ENCODE measurements at regions of chr22 and their contacts with region 1.

Region 1: GRCh38 chr22:18024276-18024947 is at the start of gene MICAL3:
- DNase-seq: peak; percentile 68 to 85 (median 74)
- ATAC-seq: peak; percentile 97
- H3K4me3 ChIP-seq: peak within 1 kb of the TSS; percentile 40
- H3K27ac ChIP-seq: no peak within 1 kb of the TSS
- H3K4me1 ChIP-seq: peaks cover 6 to 14% of the 10 kb centered on the region in 2 experiments; a peak in 4 of 5 replicates
- H3K27me3 ChIP-seq: peaks cover 18 to 21% of the 10 kb centered on the region in 2 experiments; a peak in 4 of 5 replicates
- CTCF ChIP-seq: peak; percentile 76 to 86 (median 82)
- EP300 ChIP-seq: no peak
- POLR2A ChIP-seq: no peak
- RAD21 ChIP-seq: peak; percentile 62 to 86
- polyA plus RNA-seq, gene MICAL3: 0.53 to 0.56 TPM

Region 2: DNA sequence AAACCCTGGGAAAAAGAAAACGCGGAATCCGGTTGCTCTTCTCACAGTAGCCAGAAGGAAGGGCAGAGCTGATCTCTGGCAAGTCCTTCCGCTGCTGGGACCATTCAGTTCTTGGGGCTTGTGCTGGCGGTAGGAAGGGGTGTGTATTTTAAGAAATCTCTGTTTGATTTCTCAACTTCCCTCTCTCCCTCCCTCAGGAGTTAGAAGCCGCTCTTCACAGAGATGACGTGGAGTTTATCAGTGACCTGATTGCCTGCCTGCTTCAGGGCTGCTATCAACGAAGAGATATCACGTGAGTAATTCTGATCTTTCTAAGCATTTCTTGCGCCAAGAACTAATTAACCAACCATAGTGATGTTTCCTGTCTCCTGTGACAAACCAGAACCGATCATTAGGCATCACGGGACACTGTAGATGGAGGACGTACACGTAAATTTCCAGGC is 547.0 kb before region 1 on chr22:
- CTCF ChIA-PET with region 1: no interaction called
- POLR2A ChIA-PET with region 1: no interaction called
- in situ Hi-C with region 1: no loop called
- intact Hi-C with region 1: no loop called
- DNase-seq: no peak
- ATAC-seq: peak; percentile 58
- H3K4me3 ChIP-seq: no peak overlapping the region
- H3K27ac ChIP-seq: no peak overlapping the region
- H3K4me1 ChIP-seq: no peaks in the 10 kb centered on the region
- H3K27me3 ChIP-seq: peaks cover 35 to 44% of the 10 kb centered on the region in 2 experiments
- CTCF ChIP-seq: no peak
- EP300 ChIP-seq: no peak
- POLR2A ChIP-seq: no peak
- RAD21 ChIP-seq: no peak

Region 3: DNA sequence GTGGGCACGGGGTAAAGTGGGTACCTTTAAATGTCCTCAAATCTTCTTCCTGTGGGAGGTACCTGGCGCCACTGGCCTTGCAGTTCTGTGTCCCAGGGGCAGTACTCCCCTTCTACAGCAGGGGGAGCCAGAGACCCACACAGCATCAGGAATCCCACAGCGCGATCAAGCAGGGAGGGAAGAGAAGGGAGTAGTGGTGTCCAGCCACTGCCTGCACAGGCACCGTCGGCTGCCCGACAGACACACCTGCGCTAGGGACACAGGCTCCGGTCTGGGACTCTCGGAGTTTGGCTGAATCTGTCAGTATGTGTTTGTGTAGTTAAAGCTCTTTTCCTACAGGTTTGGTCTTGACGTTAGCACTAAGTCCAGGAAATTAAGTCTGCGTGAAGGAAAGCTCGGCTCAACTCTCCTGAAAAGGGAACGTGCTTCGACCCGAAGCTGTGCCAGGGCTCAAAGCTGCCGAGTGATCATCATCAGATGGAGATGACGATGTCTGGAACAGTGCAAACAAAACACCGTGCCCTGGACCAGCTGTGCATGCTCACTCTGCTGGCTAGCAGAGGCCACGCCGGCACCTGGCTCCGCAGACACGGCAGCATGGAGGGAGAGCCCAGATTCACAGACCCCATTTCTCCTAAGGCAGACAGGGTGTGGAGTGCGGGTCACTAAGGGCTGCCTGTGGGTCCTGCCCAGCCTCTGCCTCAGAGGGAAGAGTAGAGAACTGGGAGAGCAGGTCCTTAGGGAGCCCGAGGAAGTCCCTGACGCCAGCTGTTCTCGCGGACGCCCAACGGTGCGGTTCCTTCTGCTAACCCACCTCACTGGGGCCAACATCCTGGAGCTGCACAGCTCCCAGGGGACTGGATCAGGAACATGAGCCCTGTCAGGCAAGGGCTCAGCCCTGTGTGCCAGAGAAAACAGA is 194.1 kb before region 1 on chr22:
- CTCF ChIA-PET with region 1: interaction called, 7 read pairs
- POLR2A ChIA-PET with region 1: no interaction called
- in situ Hi-C with region 1: no loop called
- intact Hi-C with region 1: loop called (anchors 10 kb)
- DNase-seq: peak; percentile 89 to 91 (median 90)
- ATAC-seq: peak; percentile 97
- H3K4me3 ChIP-seq: no peak overlapping the region
- H3K27ac ChIP-seq: no peak overlapping the region
- H3K4me1 ChIP-seq: peaks cover 0 to 8% of the 10 kb centered on the region in 2 experiments; a peak in 1 of 5 replicates
- H3K27me3 ChIP-seq: no peaks in the 10 kb centered on the region
- CTCF ChIP-seq: peak; percentile 97 to 99 (median 98)
- EP300 ChIP-seq: no peak
- POLR2A ChIP-seq: no peak
- RAD21 ChIP-seq: peak; percentile 95 to 99

Region 4: DNA sequence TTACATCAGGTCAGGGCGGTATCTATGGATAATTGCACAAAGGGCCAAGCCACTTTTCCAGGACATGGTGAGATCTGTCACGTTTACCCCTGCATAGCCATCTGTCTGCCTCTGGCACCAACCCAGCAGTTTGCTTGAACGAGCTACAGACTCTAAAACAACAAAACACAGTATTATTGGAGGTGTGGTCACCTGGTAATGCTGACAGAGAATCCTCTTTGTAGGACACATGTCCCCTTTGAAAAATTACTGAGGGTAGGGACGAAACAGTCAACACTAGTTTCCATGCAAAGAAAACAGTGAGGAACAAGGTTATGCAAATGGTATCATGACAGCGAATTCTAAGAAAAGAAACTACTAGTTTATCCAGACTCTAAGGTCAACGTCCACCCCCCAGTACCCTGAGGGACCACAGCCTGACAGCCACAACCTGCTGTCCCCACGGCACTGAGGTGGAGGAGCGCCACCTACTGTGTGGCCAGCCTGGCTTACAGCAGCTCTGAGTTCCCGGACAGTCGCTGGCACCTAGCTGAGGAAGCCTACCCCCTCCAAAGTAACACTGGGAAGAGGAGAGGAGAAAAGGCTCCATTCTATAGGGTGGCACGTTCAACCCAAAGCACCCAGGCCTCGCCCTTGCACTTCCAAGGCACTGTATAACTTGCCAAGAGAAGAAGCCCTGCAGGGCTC is 132.8 kb before region 1 on chr22:
- CTCF ChIA-PET with region 1: interaction called, 3 read pairs
- POLR2A ChIA-PET with region 1: interaction called, 3 read pairs
- in situ Hi-C with region 1: no loop called
- intact Hi-C with region 1: loop called (anchors 5 kb)
- DNase-seq: peak; percentile 51 to 59 (median 55)
- ATAC-seq: peak; percentile 84
- H3K4me3 ChIP-seq: no peak overlapping the region
- H3K27ac ChIP-seq: no peak overlapping the region
- H3K4me1 ChIP-seq: no peaks in the 10 kb centered on the region
- H3K27me3 ChIP-seq: no peaks in the 10 kb centered on the region
- CTCF ChIP-seq: peak; percentile 67 to 78 (median 68)
- EP300 ChIP-seq: no peak
- POLR2A ChIP-seq: no peak
- RAD21 ChIP-seq: peak; percentile 26 to 73; a peak in 3 of 4 replicates

Region 5: GRCh38 chr22:17910561-17911311 is 113.7 kb before region 1 on chr22:
- CTCF ChIA-PET with region 1: interaction called, 3 read pairs
- POLR2A ChIA-PET with region 1: interaction called, 3 read pairs
- in situ Hi-C with region 1: no loop called
- intact Hi-C with region 1: loop called (anchors 5 kb)
- DNase-seq: peak in 3 of 4 experiments; percentile 31 to 40 (median 38)
- ATAC-seq: peak; percentile 76
- H3K4me3 ChIP-seq: no peak overlapping the region
- H3K27ac ChIP-seq: no peak overlapping the region
- H3K4me1 ChIP-seq: peaks cover 23 to 39% of the 10 kb centered on the region in 2 experiments; a peak in 4 of 5 replicates
- H3K27me3 ChIP-seq: no peaks in the 10 kb centered on the region
- CTCF ChIP-seq: peak; percentile 31 to 57 (median 54); a peak in 4 of 6 replicates
- EP300 ChIP-seq: no peak
- POLR2A ChIP-seq: no peak
- RAD21 ChIP-seq: peak in 1 of 2 experiments; percentile 77; a peak in 2 of 4 replicates

Region 6: GRCh38 chr22:18104566-18104965 is 80.2 kb after region 1 on chr22:
- CTCF ChIA-PET with region 1: no interaction called
- POLR2A ChIA-PET with region 1: no interaction called
- in situ Hi-C with region 1: no loop called
- intact Hi-C with region 1: loop called (anchors 10 kb)
- DNase-seq: no peak
- ATAC-seq: no peak
- H3K4me3 ChIP-seq: no peak overlapping the region
- H3K27ac ChIP-seq: no peak overlapping the region
- H3K4me1 ChIP-seq: peaks cover 0 to 3% of the 10 kb centered on the region in 2 experiments; a peak in 1 of 5 replicates
- H3K27me3 ChIP-seq: no peaks in the 10 kb centered on the region
- CTCF ChIP-seq: no peak
- EP300 ChIP-seq: no peak
- POLR2A ChIP-seq: no peak
- RAD21 ChIP-seq: no peak

Measured in K562 (cell line).